Common myeloid progenitor, CD34-positive (primary cell): ENCODE measurements at regions of chr7 and their contacts with region 1.

Region 1: GRCh38 chr7:1532483-1533424 is 2.3 kb downstream of the MAFK start:
- DNase-seq: peak; percentile 64 to 89 (median 85)
- H3K4me3 ChIP-seq: peak overlapping the region; percentile 64 to 96 (median 81)
- H3K27ac ChIP-seq: peak overlapping the region; percentile 58 to 87
- H3K4me1 ChIP-seq: peaks cover 2 to 58% (median 48%) of the 10 kb centered on the region in 4 experiments
- H3K27me3 ChIP-seq: no peaks in the 10 kb centered on the region

Region 2: GRCh38 chr7:1548438-1548831 is 15.7 kb after region 1 on chr7:
- CTCF ChIA-PET with region 1: interaction called, 14 read pairs
- POLR2A ChIA-PET with region 1: interaction called, 3 read pairs
- DNase-seq: peak; percentile 36 to 49 (median 42)
- H3K4me3 ChIP-seq: no peak overlapping the region
- H3K27ac ChIP-seq: no peak overlapping the region
- H3K4me1 ChIP-seq: peaks cover 0 to 15% (median 10%) of the 10 kb centered on the region in 4 experiments
- H3K27me3 ChIP-seq: no peaks in the 10 kb centered on the region

Region 3: DNA sequence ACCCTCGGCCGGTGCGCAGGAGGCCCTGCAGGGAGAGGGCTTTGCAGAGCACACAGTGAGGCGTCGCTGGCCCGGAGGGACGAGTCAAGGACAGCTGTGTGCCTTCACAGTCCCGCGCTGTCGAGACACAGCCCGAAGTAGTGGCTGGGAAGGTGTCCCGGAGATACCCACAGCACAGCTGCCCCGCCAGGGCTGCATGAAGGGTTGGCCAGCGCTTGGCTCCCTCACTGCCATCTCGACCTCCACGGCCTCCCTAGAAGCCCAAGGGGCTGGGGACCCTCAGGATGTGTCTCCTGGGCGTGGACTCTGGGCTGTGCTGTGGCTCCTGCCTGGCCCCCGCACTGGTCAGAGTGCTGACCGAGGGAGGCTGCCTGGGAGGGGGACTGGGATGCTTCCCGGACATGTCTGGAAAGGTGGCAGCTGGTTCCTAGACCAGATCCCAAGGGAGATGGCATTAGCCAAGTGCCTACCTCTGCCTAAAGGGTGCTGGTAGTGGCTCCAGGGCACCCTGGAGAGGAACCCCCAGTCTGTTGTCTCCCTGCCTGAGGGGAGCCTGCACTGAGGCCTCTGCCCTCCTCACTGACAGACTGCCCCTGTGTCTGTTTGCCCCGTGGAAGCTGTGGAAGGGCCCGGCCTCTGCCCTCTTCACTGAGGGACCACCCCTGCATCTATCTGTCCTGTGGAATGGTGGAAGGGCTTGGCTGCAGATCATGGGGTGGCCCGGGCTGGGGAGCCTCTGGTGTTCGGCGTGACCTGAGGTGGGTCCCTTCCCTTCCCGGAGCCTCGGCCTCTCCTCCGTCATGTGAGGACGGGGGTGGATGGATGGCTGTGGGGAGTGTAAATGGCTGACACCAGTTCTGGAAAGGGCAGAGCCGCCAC is 143.2 kb after region 1 on chr7:
- CTCF ChIA-PET with region 1: no interaction called
- POLR2A ChIA-PET with region 1: no interaction called
- DNase-seq: no peak
- H3K4me3 ChIP-seq: no peak overlapping the region
- H3K27ac ChIP-seq: no peak overlapping the region
- H3K4me1 ChIP-seq: no peaks in the 10 kb centered on the region
- H3K27me3 ChIP-seq: peaks cover 0 to 69% (median 16%) of the 10 kb centered on the region in 5 experiments